Cardiac septum (tissue), 1 donor: ENCODE measurements at regions of chr20 and their contacts with region 1.

Region 1: GRCh38 chr20:24992487-24993205 is at the start of gene APMAP:
- DNase-seq: peak; percentile 99
- total RNA-seq, gene APMAP: 28.2 TPM

Region 2: DNA sequence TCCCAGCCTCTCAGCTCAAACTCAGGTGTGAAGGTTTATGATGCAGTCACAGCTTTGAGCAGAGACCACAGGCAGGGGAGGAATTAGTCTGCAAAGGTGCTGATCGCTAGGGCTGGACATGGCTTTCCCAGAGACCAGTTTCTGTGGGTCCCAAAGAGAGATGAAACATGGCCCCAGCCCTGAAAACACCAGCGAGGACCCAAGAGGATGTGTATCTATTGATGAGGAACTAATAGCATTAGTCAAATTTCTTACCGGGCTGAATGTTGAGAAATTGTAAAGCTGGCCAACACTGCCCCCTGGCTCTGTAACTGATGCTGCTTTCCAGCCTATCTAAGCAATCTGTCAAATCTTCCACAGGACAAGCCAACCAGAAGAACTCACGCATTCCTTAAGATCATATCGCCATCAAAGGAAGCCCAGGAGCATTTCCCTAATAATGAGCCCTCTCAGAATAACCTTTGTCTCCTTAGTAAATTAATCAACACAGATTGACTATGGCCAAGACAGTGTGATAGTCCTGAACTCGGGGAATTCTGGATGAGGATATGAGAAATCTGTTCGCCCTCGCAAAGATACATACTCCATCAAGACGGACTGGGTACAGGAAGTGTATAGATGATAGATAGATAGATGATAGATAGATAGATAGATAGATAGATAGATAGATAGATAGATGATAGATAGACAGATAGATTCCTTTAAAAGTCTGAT is 73.1 kb after region 1 on chr20:
- intact Hi-C with region 1: loop called (anchors 1 kb)
- DNase-seq: peak; percentile 77

Region 3: DNA sequence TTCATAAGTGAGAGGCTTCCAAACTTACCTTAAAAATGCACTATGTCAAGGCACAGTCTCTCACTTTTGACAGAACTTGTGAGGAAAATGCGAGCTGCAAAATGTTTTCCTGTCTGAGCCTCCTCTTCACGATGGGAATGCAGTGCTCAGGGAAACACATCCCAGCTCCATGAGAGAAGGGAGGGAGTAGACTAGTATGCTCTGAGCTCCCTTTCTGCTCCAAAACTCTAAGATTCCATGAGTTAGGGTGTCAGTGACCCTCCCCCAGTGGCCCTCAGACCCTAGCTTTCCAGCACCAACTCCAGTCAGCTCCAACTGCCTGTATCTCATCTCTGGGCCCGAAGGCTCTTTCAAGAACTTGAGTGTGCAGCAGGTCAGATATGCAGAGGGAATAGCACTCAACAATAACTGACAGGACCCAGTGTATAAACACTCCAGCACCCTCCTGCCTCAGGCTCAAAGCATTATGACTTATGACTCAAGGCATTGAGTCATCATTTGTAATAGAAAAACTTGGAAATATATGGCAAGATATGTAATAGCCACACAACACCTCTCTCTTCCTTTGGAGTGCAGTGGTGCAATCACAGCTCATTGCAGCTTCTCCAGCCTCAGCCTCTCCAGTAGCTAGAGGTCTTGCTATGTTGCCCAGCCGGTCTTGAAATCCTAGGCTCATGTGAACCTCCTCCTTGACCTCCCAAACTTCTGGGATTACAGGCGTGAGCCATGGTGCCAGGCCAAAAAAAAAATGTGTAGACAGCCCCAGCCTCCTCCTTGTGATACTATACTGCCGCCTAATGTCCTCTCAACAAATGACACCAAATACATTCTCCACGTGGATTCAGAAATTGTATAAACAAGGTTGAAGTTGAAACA is 186.2 kb after region 1 on chr20:
- intact Hi-C with region 1: loop called (anchors 2 kb)
- DNase-seq: no peak

Region 4: DNA sequence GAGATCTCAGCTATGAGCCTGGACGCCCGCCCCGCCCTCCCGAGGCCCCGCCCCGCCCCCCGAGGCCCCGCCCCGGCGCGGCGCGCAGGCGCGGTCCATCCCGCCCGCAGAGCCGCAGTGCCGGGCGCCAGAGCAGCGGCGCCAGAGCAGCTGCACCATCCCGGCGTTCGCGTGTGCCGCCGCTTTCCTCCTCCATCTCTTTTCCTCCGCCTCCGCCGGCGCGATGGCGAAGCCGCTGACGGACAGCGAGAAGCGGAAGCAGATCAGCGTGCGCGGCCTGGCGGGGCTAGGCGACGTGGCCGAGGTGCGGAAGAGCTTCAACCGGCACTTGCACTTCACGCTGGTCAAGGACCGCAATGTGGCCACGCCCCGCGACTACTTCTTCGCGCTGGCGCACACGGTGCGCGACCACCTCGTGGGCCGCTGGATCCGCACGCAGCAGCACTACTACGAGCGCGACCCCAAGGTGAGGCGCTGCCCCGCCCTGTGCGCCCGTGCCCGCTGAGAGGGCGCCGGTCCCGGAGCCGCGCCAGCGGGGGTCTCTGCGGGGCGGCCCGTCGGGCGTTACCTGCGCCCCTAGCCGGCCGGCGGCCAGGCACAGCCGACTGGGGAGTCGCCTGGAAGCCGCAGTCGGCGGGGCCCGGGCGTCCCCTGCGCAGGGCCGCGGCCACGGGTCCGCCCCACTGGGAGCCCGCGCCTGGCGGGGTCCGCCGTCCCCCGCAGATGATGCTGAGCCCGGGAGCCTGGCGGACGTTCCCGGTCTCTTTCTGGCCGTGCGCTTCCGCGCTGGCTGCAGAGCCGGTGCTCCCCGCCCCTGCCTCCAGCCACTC is 255.5 kb after region 1 on chr20 and contains the start of gene PYGB:
- intact Hi-C with region 1: loop called (anchors 2 kb)
- DNase-seq: peak; percentile 91
- total RNA-seq, gene PYGB: 386 TPM

Region 5: GRCh38 chr20:25399037-25399430 is 406.4 kb after region 1 on chr20:
- intact Hi-C with region 1: loop called (anchors 5 kb)
- DNase-seq: no peak

Region 6: GRCh38 chr20:25532119-25532751 is 539.6 kb after region 1 on chr20:
- intact Hi-C with region 1: no loop called
- DNase-seq: no peak